IMR-90 (cell line): ENCODE measurements at regions of chr16 and their contacts with region 1.

Region 1: DNA sequence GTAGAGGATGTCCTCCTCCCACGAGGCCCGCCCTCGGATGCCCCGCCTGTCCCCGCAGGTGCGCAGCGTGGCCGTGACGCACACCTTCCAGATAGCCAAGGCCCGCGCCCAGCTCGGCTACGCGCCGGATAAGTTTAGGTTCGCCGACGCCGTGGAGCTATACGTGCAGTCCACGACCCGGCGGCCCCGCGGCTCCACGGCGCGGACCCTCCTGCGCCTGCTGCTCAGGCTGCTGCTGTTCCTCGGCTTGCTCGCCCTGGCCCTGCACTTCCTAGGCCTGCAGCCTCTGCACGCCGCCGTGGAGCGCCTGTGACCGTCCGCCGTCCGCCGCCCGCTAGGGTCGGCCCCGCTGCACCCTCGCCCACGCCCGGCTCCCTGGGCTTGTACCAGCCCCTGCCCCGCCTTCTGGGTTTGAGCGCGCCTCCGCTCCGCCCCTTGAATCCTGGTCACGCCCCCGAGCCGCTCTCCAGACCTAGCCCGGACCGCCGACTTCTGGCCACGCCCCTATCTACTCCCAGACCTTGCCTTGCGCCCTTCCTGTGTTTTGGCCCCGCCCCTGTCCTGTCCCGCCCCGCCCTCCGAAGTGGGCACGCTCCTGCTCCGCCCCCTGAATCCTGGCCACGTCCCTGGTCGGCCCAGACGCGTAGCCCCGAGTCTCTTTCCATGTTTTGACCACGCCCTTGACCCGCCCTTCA is 15.8 kb upstream of the EEF2K start:
- DNase-seq: peak; percentile 4
- ATAC-seq: peak; percentile 77
- H3K4me3 ChIP-seq: peak overlapping the region; percentile 89
- H3K27ac ChIP-seq: peak overlapping the region; percentile 58
- H3K4me1 ChIP-seq: peaks cover 4% of the 10 kb centered on the region; the same call in 1 of the 2 replicates
- H3K27me3 ChIP-seq: no peaks in the 10 kb centered on the region
- CTCF ChIP-seq: no peak
- POLR2A ChIP-seq: no peak
- RAD21 ChIP-seq: no peak

Region 2: GRCh38 chr16:21656795-21657768 is 533.1 kb before region 1 on chr16:
- CTCF ChIA-PET with region 1: no interaction called
- POLR2A ChIA-PET with region 1: no interaction called
- dilution Hi-C with region 1: no loop called
- in situ Hi-C with region 1: no loop called
- intact Hi-C with region 1: loop called (anchors 5 kb)
- DNase-seq: peak; percentile 67
- ATAC-seq: peak; percentile 68
- H3K4me3 ChIP-seq: no peak overlapping the region
- H3K27ac ChIP-seq: no peak overlapping the region
- H3K4me1 ChIP-seq: no peaks in the 10 kb centered on the region; the same call in 1 of the 2 replicates
- H3K27me3 ChIP-seq: no peaks in the 10 kb centered on the region
- CTCF ChIP-seq: peak; percentile 82
- POLR2A ChIP-seq: no peak
- RAD21 ChIP-seq: peak; percentile 71

Region 3: DNA sequence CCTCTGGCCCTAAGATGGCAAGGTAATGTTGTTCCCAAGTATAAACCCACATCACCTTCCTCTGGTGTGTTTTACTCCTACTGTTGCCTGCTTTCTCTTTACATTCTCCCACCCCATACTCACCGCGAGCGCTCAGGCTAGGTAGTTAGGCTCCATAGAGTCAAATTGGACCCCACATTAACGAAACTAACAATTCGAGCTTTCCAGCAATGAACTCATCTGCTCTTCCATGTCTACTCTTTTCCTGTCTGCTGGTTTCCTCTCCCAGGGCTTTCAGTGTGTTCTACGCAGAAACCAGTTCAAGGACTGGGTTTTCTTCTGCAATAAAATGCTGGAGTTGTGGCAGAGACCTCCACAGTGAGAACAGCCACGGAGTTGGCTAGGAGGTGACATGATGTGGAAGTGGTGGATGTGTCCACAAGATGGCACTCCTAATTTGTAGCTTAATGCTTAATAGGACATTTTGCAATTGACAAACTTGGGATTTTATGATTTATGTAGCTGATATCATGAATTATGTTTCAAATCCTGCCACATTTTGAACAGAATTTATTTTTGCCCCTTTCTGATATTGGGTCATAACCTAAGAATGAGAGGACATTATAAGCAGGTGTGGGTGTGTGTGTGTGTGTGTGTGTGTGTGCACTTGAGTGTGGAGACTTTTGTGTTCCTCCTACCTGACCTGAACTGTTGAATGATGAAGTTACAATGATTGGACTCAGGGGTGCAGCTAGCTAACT is 239.3 kb before region 1 on chr16:
- CTCF ChIA-PET with region 1: interaction called, 5 read pairs
- POLR2A ChIA-PET with region 1: no interaction called
- dilution Hi-C with region 1: no loop called
- in situ Hi-C with region 1: no loop called
- intact Hi-C with region 1: loop called (anchors 1 kb)
- DNase-seq: peak; percentile 37
- ATAC-seq: no peak
- H3K4me3 ChIP-seq: no peak overlapping the region
- H3K27ac ChIP-seq: no peak overlapping the region
- H3K4me1 ChIP-seq: peaks cover 2% of the 10 kb centered on the region; the same call in 1 of the 2 replicates
- H3K27me3 ChIP-seq: no peaks in the 10 kb centered on the region
- CTCF ChIP-seq: peak; percentile 38
- POLR2A ChIP-seq: no peak
- RAD21 ChIP-seq: peak; percentile 21; the same call in 1 of the 2 replicates

Region 4: GRCh38 chr16:21989133-21989532 is 201.1 kb before region 1 on chr16:
- CTCF ChIA-PET with region 1: interaction called, 10 read pairs
- POLR2A ChIA-PET with region 1: no interaction called
- dilution Hi-C with region 1: no loop called
- in situ Hi-C with region 1: no loop called
- intact Hi-C with region 1: no loop called
- DNase-seq: peak; percentile 10
- ATAC-seq: no peak; the same call in 1 of the 2 replicates
- H3K4me3 ChIP-seq: no peak overlapping the region
- H3K27ac ChIP-seq: no peak overlapping the region
- H3K4me1 ChIP-seq: no peaks in the 10 kb centered on the region
- H3K27me3 ChIP-seq: no peaks in the 10 kb centered on the region
- CTCF ChIP-seq: no peak
- POLR2A ChIP-seq: no peak
- RAD21 ChIP-seq: no peak

Region 5: GRCh38 chr16:22001591-22001990 is 188.6 kb before region 1 on chr16:
- CTCF ChIA-PET with region 1: interaction called, 12 read pairs
- POLR2A ChIA-PET with region 1: no interaction called
- dilution Hi-C with region 1: no loop called
- in situ Hi-C with region 1: no loop called
- intact Hi-C with region 1: loop called (anchors 1 kb)
- DNase-seq: peak; percentile 71
- ATAC-seq: peak; percentile 64
- H3K4me3 ChIP-seq: no peak overlapping the region
- H3K27ac ChIP-seq: no peak overlapping the region
- H3K4me1 ChIP-seq: peaks cover 3% of the 10 kb centered on the region
- H3K27me3 ChIP-seq: no peaks in the 10 kb centered on the region
- CTCF ChIP-seq: no peak
- POLR2A ChIP-seq: no peak
- RAD21 ChIP-seq: no peak

Region 6: DNA sequence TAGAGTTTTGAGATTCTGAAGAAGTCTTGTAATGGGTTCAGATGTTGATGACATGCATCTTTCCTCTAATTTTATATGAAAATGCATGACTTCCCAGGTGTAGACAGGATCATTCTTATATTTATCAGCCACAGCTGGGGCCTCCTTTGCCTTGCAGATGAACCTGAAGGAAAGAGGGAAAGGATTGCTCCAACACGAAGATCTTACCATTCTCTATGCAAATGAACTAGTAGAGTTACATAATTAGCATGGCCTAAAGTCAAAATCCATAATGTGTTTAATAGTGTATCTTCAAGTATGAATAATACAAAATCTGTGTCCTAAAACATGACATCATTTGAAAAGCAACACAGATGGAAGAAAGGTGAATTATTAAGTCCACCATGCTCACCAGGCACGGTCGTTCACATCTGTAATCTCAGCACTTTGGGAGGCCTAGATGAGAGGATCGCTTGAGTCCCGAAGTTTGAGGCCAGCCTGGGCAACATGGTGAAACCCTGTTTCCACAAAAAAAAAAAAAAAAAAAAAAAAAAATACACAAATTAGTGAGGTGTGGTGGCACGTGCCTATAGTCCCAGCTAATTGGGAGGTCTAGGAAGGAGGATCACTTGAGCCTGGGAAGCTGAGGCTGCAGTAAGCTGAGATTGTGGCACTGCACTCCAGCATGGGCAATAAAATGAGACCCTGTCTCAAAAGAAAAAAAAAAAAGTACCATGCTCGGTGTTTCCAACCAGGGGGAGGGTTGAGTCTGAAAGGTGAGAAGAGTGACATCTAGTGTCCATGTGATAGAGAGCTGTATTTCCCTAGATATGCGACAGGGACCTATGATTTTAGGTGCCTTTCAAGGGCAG is 91.6 kb before region 1 on chr16:
- CTCF ChIA-PET with region 1: interaction called, 4 read pairs
- POLR2A ChIA-PET with region 1: no interaction called
- dilution Hi-C with region 1: no loop called
- in situ Hi-C with region 1: no loop called
- intact Hi-C with region 1: loop called (anchors 1 kb)
- DNase-seq: peak; percentile 44
- ATAC-seq: peak; percentile 95
- H3K4me3 ChIP-seq: no peak overlapping the region
- H3K27ac ChIP-seq: no peak overlapping the region
- H3K4me1 ChIP-seq: no peaks in the 10 kb centered on the region
- H3K27me3 ChIP-seq: peaks cover 3% of the 10 kb centered on the region
- CTCF ChIP-seq: peak; percentile 65
- POLR2A ChIP-seq: no peak
- RAD21 ChIP-seq: peak; percentile 67

Region 7: DNA sequence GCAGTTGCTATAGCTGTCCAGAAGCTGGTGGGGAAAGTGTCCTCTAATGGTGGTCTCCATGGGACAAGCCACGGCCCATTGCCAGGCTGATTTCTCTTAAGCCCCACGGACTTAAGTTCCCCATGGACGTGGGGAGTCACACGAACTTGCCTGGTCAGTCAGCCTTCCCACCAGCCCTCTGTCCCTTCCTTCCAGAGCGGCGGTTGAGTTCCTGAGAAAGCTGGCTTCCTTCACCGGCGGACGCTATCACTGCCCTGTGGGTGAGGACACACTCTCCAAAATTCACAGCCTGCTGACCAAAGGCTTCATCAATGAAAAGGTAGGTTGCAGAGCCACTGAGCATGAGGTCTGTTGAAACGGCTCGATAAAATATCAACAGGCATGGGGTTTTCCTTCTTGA is 37.9 kb before region 1 on chr16:
- CTCF ChIA-PET with region 1: no interaction called
- POLR2A ChIA-PET with region 1: no interaction called
- dilution Hi-C with region 1: no loop called
- in situ Hi-C with region 1: no loop called
- intact Hi-C with region 1: no loop called
- DNase-seq: no peak
- ATAC-seq: no peak
- H3K4me3 ChIP-seq: no peak overlapping the region
- H3K27ac ChIP-seq: no peak overlapping the region
- H3K4me1 ChIP-seq: no peaks in the 10 kb centered on the region
- H3K27me3 ChIP-seq: peaks cover 17% of the 10 kb centered on the region
- CTCF ChIP-seq: no peak
- POLR2A ChIP-seq: no peak
- RAD21 ChIP-seq: no peak

Region 8: GRCh38 chr16:22297114-22297878 is 107.1 kb after region 1 on chr16 and contains the start of gene POLR3E:
- CTCF ChIA-PET with region 1: interaction called, 5 read pairs
- POLR2A ChIA-PET with region 1: no interaction called
- dilution Hi-C with region 1: no loop called
- in situ Hi-C with region 1: no loop called
- intact Hi-C with region 1: loop called (anchors 1 kb)
- DNase-seq: peak; percentile 95
- ATAC-seq: peak; percentile 93
- H3K4me3 ChIP-seq: peak within 1 kb of the TSS; percentile 75
- H3K27ac ChIP-seq: peak within 1 kb of the TSS; percentile 80
- H3K4me1 ChIP-seq: peaks cover 2% of the 10 kb centered on the region; the same call in 1 of the 2 replicates
- H3K27me3 ChIP-seq: no peaks in the 10 kb centered on the region
- CTCF ChIP-seq: peak; percentile 94
- POLR2A ChIP-seq: peak; percentile 64; the same call in 1 of the 2 replicates
- RAD21 ChIP-seq: peak; percentile 84
- total RNA-seq, gene POLR3E: 19.9 and 71.1 TPM in 2 replicates